HepG2 (cell line): ENCODE measurements at regions of chr5 and their contacts with region 1.

Region 1: GRCh38 chr5:134527146-134527960 is 1.9 kb downstream of the JADE2 start:
- DNase-seq: peak; percentile 66
- ATAC-seq: peak; percentile 74
- H3K4me3 ChIP-seq: peak overlapping the region; percentile 85 to 92 (median 86)
- H3K27ac ChIP-seq: peak overlapping the region; percentile 95
- H3K4me1 ChIP-seq: peaks cover 48% of the 10 kb centered on the region
- H3K27me3 ChIP-seq: no peaks in the 10 kb centered on the region; a peak in 1 of 5 replicates
- CTCF ChIP-seq: peak; percentile 79
- EP300 ChIP-seq: no peak
- POLR2A ChIP-seq: no peak
- RAD21 ChIP-seq: peak; percentile 77

Region 2: GRCh38 chr5:134436523-134437339 is 90.6 kb before region 1 on chr5:
- CTCF ChIA-PET with region 1: no interaction called
- POLR2A ChIA-PET with region 1: interaction called, 4 read pairs
- in situ Hi-C with region 1: no loop called
- intact Hi-C with region 1: loop called (anchors 2 kb)
- DNase-seq: peak; percentile 64
- ATAC-seq: peak; percentile 79
- H3K4me3 ChIP-seq: peak overlapping the region; percentile 45 to 72 (median 46)
- H3K27ac ChIP-seq: peak overlapping the region; percentile 47
- H3K4me1 ChIP-seq: peaks cover 72% of the 10 kb centered on the region
- H3K27me3 ChIP-seq: peaks cover 2 to 11% of the 10 kb centered on the region in 2 experiments; a peak in 4 of 5 replicates
- CTCF ChIP-seq: no peak
- EP300 ChIP-seq: no peak
- POLR2A ChIP-seq: no peak
- RAD21 ChIP-seq: no peak

Region 3: GRCh38 chr5:134465816-134466240 is 61.5 kb before region 1 on chr5:
- CTCF ChIA-PET with region 1: no interaction called
- POLR2A ChIA-PET with region 1: interaction called, 58 read pairs
- in situ Hi-C with region 1: no loop called
- intact Hi-C with region 1: no loop called
- DNase-seq: peak; percentile 73
- ATAC-seq: peak; percentile 83
- H3K4me3 ChIP-seq: peak overlapping the region; percentile 81 to 83 (median 82)
- H3K27ac ChIP-seq: peak overlapping the region; percentile 95
- H3K4me1 ChIP-seq: peaks cover 27% of the 10 kb centered on the region
- H3K27me3 ChIP-seq: peaks cover 0 to 3% of the 10 kb centered on the region in 2 experiments; a peak in 3 of 5 replicates
- CTCF ChIP-seq: no peak
- EP300 ChIP-seq: no peak; a peak in 1 of 4 replicates
- POLR2A ChIP-seq: peak; percentile 64 to 86
- RAD21 ChIP-seq: 0 out of 2 replicates have a peak, but pooled peaks have one; percentile 12

Region 4: DNA sequence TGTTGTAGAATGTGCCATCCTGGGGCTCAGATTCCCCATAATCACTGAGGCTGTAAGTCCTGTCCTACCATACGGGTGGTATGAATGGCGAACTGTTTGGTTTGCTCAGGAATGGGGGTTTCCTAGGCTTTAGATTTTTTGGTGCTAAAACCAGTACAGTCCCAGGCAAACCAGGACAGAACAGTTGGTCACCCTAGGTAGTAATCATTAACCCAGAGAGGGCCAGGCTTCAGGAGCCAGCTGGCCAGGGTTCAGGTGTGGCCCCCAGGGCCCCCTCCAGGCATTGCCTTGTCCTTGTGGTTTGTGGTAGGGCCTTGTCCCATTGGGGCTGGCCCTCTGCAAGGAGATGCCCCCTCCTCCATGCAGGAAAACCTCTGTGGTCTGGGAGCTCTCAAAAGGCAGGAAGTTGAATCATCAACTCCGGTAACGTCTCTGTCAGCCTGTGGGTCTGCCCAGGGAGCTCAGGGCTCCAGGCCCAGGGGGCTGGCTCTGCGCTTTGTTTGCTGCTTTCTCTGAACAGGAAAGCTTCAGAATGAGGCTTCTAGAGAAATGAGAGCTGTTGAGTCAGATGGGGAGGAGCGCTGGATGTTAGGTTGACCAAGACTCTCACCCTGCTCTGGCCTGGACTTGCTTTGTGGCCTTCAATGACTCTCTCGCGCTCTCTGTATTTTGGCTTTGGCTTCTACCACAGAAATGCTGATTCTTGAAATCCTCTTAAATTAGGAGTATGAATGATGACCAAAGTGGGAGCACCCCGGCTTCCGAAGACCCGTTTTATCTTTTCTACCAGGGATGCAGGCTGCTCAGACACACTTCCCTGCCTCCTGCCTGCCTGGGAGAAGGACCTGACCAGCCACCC is 24.0 kb before region 1 on chr5:
- CTCF ChIA-PET with region 1: no interaction called
- POLR2A ChIA-PET with region 1: interaction called, 85 read pairs
- in situ Hi-C with region 1: no loop called
- intact Hi-C with region 1: loop called (anchors 2 kb)
- DNase-seq: peak; percentile 93
- ATAC-seq: peak; percentile 72
- H3K4me3 ChIP-seq: peak overlapping the region; percentile 27 to 62 (median 41)
- H3K27ac ChIP-seq: peak overlapping the region; percentile 89
- H3K4me1 ChIP-seq: peaks cover 71% of the 10 kb centered on the region
- H3K27me3 ChIP-seq: no peaks in the 10 kb centered on the region; a peak in 1 of 5 replicates
- CTCF ChIP-seq: peak; percentile 34
- EP300 ChIP-seq: no peak; a peak in 1 of 4 replicates
- POLR2A ChIP-seq: peak in 1 of 2 experiments; percentile 78; a peak in 2 of 4 replicates
- RAD21 ChIP-seq: peak; percentile 30; the same call in 1 of the 2 replicates

Region 5: GRCh38 chr5:134511788-134512650 is 15.3 kb before region 1 on chr5:
- CTCF ChIA-PET with region 1: interaction called, 4 read pairs
- POLR2A ChIA-PET with region 1: interaction called, 87 read pairs
- in situ Hi-C with region 1: no loop called
- intact Hi-C with region 1: loop called (anchors 2 kb)
- DNase-seq: peak; percentile 74
- ATAC-seq: peak; percentile 84
- H3K4me3 ChIP-seq: peak overlapping the region; percentile 12 to 60 (median 24); a peak in 5 of 6 replicates
- H3K27ac ChIP-seq: peak overlapping the region; percentile 71
- H3K4me1 ChIP-seq: peaks cover 73% of the 10 kb centered on the region
- H3K27me3 ChIP-seq: no peaks in the 10 kb centered on the region
- CTCF ChIP-seq: peak; percentile 77
- EP300 ChIP-seq: peak in 1 of 2 experiments; percentile 40; a peak in 1 of 4 replicates
- POLR2A ChIP-seq: peak in 1 of 2 experiments; percentile 61; a peak in 1 of 4 replicates
- RAD21 ChIP-seq: peak; percentile 57; the same call in 1 of the 2 replicates

Region 6: GRCh38 chr5:134540747-134541733 is 13.7 kb after region 1 on chr5:
- CTCF ChIA-PET with region 1: no interaction called
- POLR2A ChIA-PET with region 1: interaction called, 3 read pairs
- in situ Hi-C with region 1: no loop called
- intact Hi-C with region 1: loop called (anchors 1 kb)
- DNase-seq: no peak
- ATAC-seq: no peak
- H3K4me3 ChIP-seq: no peak overlapping the region
- H3K27ac ChIP-seq: no peak overlapping the region
- H3K4me1 ChIP-seq: no peaks in the 10 kb centered on the region
- H3K27me3 ChIP-seq: no peaks in the 10 kb centered on the region
- CTCF ChIP-seq: no peak
- EP300 ChIP-seq: no peak
- POLR2A ChIP-seq: no peak
- RAD21 ChIP-seq: no peak

Region 7: GRCh38 chr5:134567641-134568338 is 40.4 kb after region 1 on chr5:
- CTCF ChIA-PET with region 1: no interaction called
- POLR2A ChIA-PET with region 1: no interaction called
- in situ Hi-C with region 1: no loop called
- intact Hi-C with region 1: no loop called
- DNase-seq: no peak
- ATAC-seq: no peak
- H3K4me3 ChIP-seq: no peak overlapping the region
- H3K27ac ChIP-seq: no peak overlapping the region
- H3K4me1 ChIP-seq: no peaks in the 10 kb centered on the region
- H3K27me3 ChIP-seq: no peaks in the 10 kb centered on the region
- CTCF ChIP-seq: no peak
- EP300 ChIP-seq: no peak
- POLR2A ChIP-seq: no peak
- RAD21 ChIP-seq: no peak

Region 8: GRCh38 chr5:134577796-134578363 is 50.5 kb after region 1 on chr5:
- CTCF ChIA-PET with region 1: no interaction called
- POLR2A ChIA-PET with region 1: interaction called, 4 read pairs
- in situ Hi-C with region 1: no loop called
- intact Hi-C with region 1: loop called (anchors 5 kb)
- DNase-seq: peak; percentile 59
- ATAC-seq: peak; percentile 80
- H3K4me3 ChIP-seq: no peak overlapping the region
- H3K27ac ChIP-seq: no peak overlapping the region
- H3K4me1 ChIP-seq: no peaks in the 10 kb centered on the region
- H3K27me3 ChIP-seq: no peaks in the 10 kb centered on the region
- CTCF ChIP-seq: peak; percentile 94
- EP300 ChIP-seq: no peak
- POLR2A ChIP-seq: no peak
- RAD21 ChIP-seq: peak; percentile 85